Activated CD4-positive, alpha-beta memory T cell treated with anti-CD3 and anti-CD28 coated beads for 36 hours (primary cell): ENCODE measurements at regions of chr2 and their contacts with region 1.

Region 1: GRCh38 chr2:70861777-70862625 is 26.4 kb upstream of the CD207 start:
- DNase-seq: peak; percentile 80
- H3K4me3 Mint-ChIP-seq: no peak overlapping the region
- H3K27ac Mint-ChIP-seq: no peak overlapping the region
- H3K4me1 Mint-ChIP-seq: no peaks in the 10 kb centered on the region
- H3K27me3 Mint-ChIP-seq: peaks cover 26% of the 10 kb centered on the region

Region 2: DNA sequence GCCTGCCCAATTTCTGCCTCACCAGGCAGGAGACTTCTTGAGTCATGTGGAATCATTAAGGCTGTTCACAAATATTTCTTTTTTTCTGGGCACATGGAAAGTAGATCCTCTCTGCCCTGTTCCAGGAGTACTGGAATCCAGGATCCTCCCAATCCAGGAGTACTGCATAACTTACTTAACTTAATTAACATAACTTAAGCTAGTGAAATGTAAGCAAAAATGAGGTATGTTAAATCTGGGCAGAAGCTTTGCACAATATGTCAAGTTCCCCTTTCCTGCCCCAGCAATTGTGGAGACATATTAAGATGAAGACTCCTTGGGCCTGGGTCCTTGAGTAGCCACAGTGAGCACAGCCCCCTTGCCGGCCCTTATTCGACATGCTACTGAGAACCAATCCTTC is 29.6 kb before region 1 on chr2:
- CTCF ChIA-PET with region 1: no interaction called
- POLR2A ChIA-PET with region 1: no interaction called
- intact Hi-C with region 1: no loop called
- DNase-seq: no peak
- H3K4me3 Mint-ChIP-seq: no peak overlapping the region
- H3K27ac Mint-ChIP-seq: no peak overlapping the region
- H3K4me1 Mint-ChIP-seq: no peaks in the 10 kb centered on the region
- H3K27me3 Mint-ChIP-seq: peaks cover 7% of the 10 kb centered on the region

Region 3: GRCh38 chr2:70919672-70920366 is 57.8 kb after region 1 on chr2:
- CTCF ChIA-PET with region 1: interaction called, 14 read pairs
- POLR2A ChIA-PET with region 1: no interaction called
- intact Hi-C with region 1: no loop called
- DNase-seq: peak; percentile 83
- H3K4me3 Mint-ChIP-seq: no peak overlapping the region
- H3K27ac Mint-ChIP-seq: no peak overlapping the region
- H3K4me1 Mint-ChIP-seq: no peaks in the 10 kb centered on the region
- H3K27me3 Mint-ChIP-seq: peaks cover 14% of the 10 kb centered on the region